ENCODE measurements at regions of chr11 and their contacts with region 1.

Region 1: GRCh38 chr11:62787005-62787759 is at the start of gene TMEM179B:
- DNase-seq: peak; percentile 93
- ATAC-seq: peak; percentile 73
- H3K4me3 Mint-ChIP-seq: peak within 1 kb of the TSS; percentile 92
- H3K27ac Mint-ChIP-seq: peak within 1 kb of the TSS; percentile 97
- H3K4me1 Mint-ChIP-seq: peaks cover 38% of the 10 kb centered on the region
- H3K27me3 Mint-ChIP-seq: no peaks in the 10 kb centered on the region
- total RNA-seq, gene TMEM179B: 48.7 to 52.2 TPM

Region 2: GRCh38 chr11:62678770-62679696 is 108.1 kb before region 1 on chr11 and contains the start of gene UBXN1:
- POLR2A ChIA-PET with region 1: no interaction called
- DNase-seq: peak; percentile 82
- ATAC-seq: peak; percentile 79
- H3K4me3 Mint-ChIP-seq: peak within 1 kb of the TSS; percentile 85
- H3K27ac Mint-ChIP-seq: peak within 1 kb of the TSS; percentile 88
- H3K4me1 Mint-ChIP-seq: peaks cover 20% of the 10 kb centered on the region
- H3K27me3 Mint-ChIP-seq: no peaks in the 10 kb centered on the region
- total RNA-seq, gene UBXN1: 135 to 136 TPM

Region 3: GRCh38 chr11:62753736-62754603 is 33.2 kb before region 1 on chr11 and contains the start of gene ZBTB3:
- POLR2A ChIA-PET with region 1: interaction called, 23 read pairs
- DNase-seq: peak; percentile 95
- ATAC-seq: peak; percentile 99
- H3K4me3 Mint-ChIP-seq: peak within 1 kb of the TSS; percentile 96
- H3K27ac Mint-ChIP-seq: peak within 1 kb of the TSS; percentile 98
- H3K4me1 Mint-ChIP-seq: peaks cover 26% of the 10 kb centered on the region
- H3K27me3 Mint-ChIP-seq: peaks cover 4% of the 10 kb centered on the region
- total RNA-seq, gene ZBTB3: 14.0 to 17.1 TPM

Region 4: DNA sequence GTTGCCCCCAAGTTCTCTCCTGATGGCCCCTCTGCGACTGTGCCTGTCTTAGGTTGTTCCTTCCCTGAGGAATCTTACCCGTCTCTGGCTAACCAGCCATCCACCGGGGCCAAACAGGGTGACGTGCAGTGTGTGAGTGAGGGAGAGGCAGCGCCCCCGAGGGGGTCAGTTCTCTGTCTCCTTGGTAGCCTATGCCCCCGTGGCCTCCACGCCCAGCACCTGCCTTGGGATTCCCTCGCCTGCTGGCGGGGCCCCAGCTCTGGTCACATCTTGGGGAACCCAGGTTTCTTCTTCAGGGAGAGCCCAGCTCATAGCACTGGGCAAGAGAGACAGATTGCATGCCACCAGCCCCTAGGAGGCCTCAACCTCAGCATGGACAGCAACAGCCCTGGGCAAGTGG is 12.3 kb after region 1 on chr11:
- POLR2A ChIA-PET with region 1: interaction called, 14 read pairs
- DNase-seq: no peak
- ATAC-seq: no peak
- H3K4me3 Mint-ChIP-seq: no peak overlapping the region
- H3K27ac Mint-ChIP-seq: peak overlapping the region; percentile 42
- H3K4me1 Mint-ChIP-seq: peaks cover 25% of the 10 kb centered on the region
- H3K27me3 Mint-ChIP-seq: no peaks in the 10 kb centered on the region

Region 5: DNA sequence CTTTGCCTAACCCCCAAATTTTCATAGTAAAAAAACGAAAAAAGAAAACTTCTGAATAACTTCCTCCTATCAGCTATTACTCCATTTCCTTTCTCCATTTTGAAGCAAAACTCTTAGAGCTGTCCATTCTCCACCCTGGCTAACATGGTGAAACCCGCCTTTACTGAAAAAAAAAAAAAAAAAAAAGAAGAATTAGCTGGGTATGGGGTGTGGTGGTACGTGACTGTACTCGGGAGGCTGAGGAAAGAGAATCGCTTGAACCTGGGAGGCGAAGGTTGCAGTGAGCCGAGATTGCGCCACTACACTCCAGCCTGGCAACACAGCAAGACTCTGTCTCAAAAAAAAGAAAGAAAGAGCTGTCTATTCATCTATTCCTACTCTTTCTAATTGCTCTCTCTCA is 29.4 kb after region 1 on chr11:
- POLR2A ChIA-PET with region 1: interaction called, 10 read pairs
- DNase-seq: no peak
- ATAC-seq: no peak
- H3K4me3 Mint-ChIP-seq: no peak overlapping the region
- H3K27ac Mint-ChIP-seq: no peak overlapping the region
- H3K4me1 Mint-ChIP-seq: peaks cover 1% of the 10 kb centered on the region
- H3K27me3 Mint-ChIP-seq: no peaks in the 10 kb centered on the region

Region 6: DNA sequence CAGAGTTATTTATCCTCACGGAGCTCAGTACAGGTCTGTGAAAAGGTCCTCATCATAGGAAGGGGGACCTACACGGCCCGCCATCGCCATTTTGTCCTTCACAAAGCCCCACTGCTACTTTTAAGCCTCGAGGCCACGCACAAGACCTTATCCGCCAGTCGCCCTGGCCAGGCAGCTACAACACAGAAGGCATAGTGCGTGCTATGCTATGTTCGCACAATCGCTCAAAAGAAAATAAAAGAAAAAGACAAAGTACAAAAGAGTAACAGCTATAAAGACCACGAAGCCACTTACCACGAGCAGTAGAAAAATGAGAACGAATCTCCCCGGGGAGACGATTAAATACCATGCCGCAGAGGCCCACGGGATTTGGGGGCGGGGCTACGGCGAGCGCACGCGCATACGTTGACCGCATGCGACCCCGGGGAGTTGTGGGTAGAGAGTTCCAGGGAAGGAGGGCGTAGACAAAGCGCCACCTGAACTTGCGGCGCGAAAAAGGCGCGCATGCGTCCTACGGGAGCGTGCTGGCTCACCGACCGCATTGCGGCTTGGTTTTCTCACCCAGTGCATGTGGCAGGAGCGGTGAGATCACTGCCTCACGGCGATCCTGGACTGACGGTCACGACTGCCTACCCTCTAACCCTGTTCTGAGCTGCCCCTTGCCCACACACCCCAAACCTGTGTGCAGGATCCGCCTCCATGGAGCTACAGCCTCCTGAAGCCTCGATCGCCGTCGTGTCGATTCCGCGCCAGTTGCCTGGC is 68.6 kb after region 1 on chr11:
- POLR2A ChIA-PET with region 1: interaction called, 117 read pairs
- DNase-seq: peak; percentile 99
- ATAC-seq: peak; percentile 89
- H3K4me3 Mint-ChIP-seq: peak overlapping the region; percentile 96
- H3K27ac Mint-ChIP-seq: peak overlapping the region; percentile 98
- H3K4me1 Mint-ChIP-seq: peaks cover 45% of the 10 kb centered on the region
- H3K27me3 Mint-ChIP-seq: no peaks in the 10 kb centered on the region

Region 7: GRCh38 chr11:62880803-62881578 is 93.8 kb after region 1 on chr11 and contains the start of gene SLC3A2:
- POLR2A ChIA-PET with region 1: interaction called, 82 read pairs
- DNase-seq: peak; percentile 93
- ATAC-seq: peak; percentile 83
- H3K4me3 Mint-ChIP-seq: peak within 1 kb of the TSS; percentile 100
- H3K27ac Mint-ChIP-seq: peak within 1 kb of the TSS; percentile 100
- H3K4me1 Mint-ChIP-seq: peaks cover 40% of the 10 kb centered on the region
- H3K27me3 Mint-ChIP-seq: no peaks in the 10 kb centered on the region
- total RNA-seq, gene SLC3A2: 222 to 228 TPM